Right cardiac atrium (tissue), 5 donors: ENCODE measurements at regions of chr20 and their contacts with region 1.

Region 1: GRCh38 chr20:49562311-49563014 is 5.5 kb downstream of the PTGIS start:
- DNase-seq: peak; percentile 88 to 95 (median 94)
- ATAC-seq: peak; percentile 93 to 94
- H3K4me3 ChIP-seq: no peak overlapping the region
- H3K27ac ChIP-seq: peak overlapping the region; percentile 65
- H3K4me1 ChIP-seq: peaks cover 15% of the 10 kb centered on the region
- H3K27me3 ChIP-seq: no peaks in the 10 kb centered on the region

Region 2: DNA sequence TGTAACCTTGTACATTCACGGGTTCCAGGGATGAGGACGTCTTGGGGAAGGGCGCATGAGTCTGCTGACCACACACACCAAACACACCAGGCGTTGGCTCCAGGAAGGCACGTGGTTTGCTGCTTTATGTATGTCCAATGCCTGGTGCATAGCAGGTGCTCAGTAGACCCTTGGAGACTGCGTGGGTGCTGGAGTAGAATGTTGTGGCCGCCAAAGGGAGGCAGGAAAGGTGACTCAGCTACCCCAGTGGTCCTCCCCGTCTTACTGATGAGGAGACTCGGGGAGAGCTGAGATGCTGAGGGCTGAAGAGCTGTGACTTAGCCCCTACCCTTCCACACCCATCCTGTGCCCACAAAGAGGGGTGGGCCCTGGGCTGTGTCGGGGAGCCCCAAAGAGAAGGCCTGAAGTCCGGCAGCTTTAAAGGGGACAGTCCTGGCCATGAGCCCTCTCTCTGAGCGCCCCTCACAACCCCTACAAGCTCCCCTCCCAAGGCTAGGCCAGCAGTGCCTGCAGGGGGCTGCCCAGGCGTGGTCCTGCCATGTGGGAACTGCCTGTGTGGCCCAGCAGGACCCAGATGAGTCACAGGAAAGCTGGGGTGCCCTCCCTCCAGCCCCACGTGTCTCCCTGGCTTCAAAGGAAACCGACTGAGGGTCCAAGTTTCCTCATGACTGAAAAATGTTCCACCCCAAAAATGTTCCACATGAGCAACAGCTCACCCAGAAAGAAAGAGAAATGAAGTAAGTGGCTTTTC is 33.5 kb after region 1 on chr20:
- intact Hi-C with region 1: loop called in 1 of 4 experiments (anchors 5 kb)
- DNase-seq: peak in 2 of 3 donors; percentile 70 to 75
- ATAC-seq: peak; percentile 15 to 56
- H3K4me3 ChIP-seq: no peak overlapping the region
- H3K27ac ChIP-seq: peak overlapping the region; percentile 2
- H3K4me1 ChIP-seq: peaks cover 13% of the 10 kb centered on the region
- H3K27me3 ChIP-seq: no peaks in the 10 kb centered on the region

Region 3: DNA sequence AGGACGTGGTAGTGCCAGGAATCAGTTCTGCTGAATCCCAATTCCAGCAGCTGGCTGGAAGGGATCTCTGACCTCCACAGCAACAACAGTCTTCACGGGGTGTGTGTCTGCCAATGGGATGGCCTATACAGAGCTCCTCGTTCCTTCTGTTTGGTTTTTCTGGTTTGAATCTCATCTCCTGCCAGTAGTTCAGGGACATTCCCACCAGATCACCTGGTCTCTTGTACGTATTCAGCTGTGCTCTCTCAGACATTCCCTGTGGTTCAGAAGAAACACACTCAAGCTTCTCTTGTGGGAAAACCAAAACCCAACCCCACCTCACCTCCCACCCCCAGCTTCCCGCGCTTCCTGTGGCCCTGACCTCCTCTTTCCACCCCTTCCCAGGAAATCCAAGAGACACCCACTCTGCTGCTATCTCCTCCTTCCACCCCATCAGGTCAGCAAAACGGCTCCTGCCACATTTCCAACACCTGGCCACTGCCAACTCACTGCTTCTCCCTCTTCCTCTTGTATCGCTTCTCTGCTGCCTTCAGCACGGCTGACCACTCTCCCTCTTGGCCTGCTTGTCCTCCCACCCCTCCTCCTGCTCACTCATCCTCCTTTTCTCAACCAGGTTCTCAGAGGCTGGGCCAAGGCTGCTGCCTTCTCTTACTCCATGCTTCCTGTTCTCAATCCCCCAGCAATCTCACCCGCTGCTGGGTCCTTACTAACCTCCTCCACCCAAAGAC is 68.8 kb after region 1 on chr20:
- intact Hi-C with region 1: no loop called
- DNase-seq: peak in 1 of 3 donors; percentile 56
- ATAC-seq: peak; percentile 35 to 45
- H3K4me3 ChIP-seq: no peak overlapping the region
- H3K27ac ChIP-seq: no peak overlapping the region
- H3K4me1 ChIP-seq: peaks cover 2% of the 10 kb centered on the region
- H3K27me3 ChIP-seq: no peaks in the 10 kb centered on the region

Region 4: GRCh38 chr20:49657118-49657901 is 94.8 kb after region 1 on chr20:
- intact Hi-C with region 1: no loop called
- DNase-seq: no peak
- ATAC-seq: peak; percentile 38 to 53
- H3K4me3 ChIP-seq: no peak overlapping the region
- H3K27ac ChIP-seq: no peak overlapping the region
- H3K4me1 ChIP-seq: peaks cover 10% of the 10 kb centered on the region
- H3K27me3 ChIP-seq: no peaks in the 10 kb centered on the region